T-cell (primary cell): ENCODE measurements at regions of chr17 and their contacts with region 1.

Region 1: DNA sequence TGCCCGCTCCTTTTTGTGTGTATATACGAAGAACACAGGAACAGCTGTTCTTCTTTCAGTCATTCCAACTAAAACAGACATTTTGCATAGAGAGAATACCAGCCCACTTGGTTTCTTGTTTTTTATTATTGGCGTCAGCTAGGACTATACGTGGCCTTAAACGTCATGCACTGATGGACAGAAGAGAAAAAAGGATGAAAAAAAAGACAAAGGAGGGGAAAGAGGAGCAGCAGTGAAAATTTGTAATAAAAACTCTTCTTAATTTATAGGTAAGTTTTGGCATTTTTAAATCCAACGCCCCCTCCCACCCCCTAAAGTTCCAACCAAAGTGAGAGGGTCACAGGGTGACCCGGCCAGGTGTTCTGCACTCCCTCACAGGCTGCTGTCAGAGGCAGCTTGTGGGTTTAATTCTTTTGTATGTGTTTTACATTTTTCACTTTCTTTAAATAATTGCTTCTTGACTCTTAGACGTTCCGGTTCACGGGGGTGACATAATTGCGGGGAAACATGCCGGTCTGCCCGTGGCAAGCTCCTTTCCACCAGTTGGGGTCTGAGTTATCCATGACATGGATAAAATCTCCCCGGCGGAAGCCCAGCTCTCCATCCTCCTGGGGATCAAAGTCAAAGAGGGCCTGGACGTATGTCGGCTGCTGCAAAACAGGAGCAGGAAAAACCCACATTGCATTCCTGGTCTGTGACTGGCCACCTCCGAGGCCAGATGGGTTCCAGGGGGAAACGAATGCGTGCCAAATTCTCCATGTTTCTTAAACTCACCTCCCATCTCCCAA is 30.9 kb upstream of the SLC25A19 start:
- DNase-seq: no peak
- ATAC-seq: no peak
- H3K4me3 ChIP-seq: no peak overlapping the region
- H3K4me3 Mint-ChIP-seq: no peak overlapping the region
- H3K27ac ChIP-seq: no peak overlapping the region
- H3K27ac Mint-ChIP-seq: no peak overlapping the region
- H3K4me1 ChIP-seq: peaks cover 0 to 8% of the 10 kb centered on the region in 2 experiments
- H3K4me1 Mint-ChIP-seq: peaks cover 5 to 8% (median 8%) of the 10 kb centered on the region in 3 donors
- H3K27me3 ChIP-seq: peaks cover 0 to 3% of the 10 kb centered on the region in 2 experiments
- H3K27me3 Mint-ChIP-seq: no peaks in the 10 kb centered on the region

Region 2: GRCh38 chr17:75412455-75413317 is 92.6 kb after region 1 on chr17:
- CTCF ChIA-PET with region 1: interaction called, 3 to 22 read pairs
- POLR2A ChIA-PET with region 1: interaction called in 1 of 2 experiments, 4 read pairs
- DNase-seq: peak; percentile 41 to 89 (median 66)
- ATAC-seq: peak; percentile 75 to 90 (median 87)
- H3K4me3 ChIP-seq: no peak overlapping the region
- H3K4me3 Mint-ChIP-seq: peak overlapping the region in 2 of 3 donors; percentile 35 to 42
- H3K27ac ChIP-seq: no peak overlapping the region
- H3K27ac Mint-ChIP-seq: peak overlapping the region in 1 of 2 donors; percentile 34
- H3K4me1 ChIP-seq: peaks cover 0 to 5% of the 10 kb centered on the region in 2 experiments
- H3K4me1 Mint-ChIP-seq: peaks cover 14 to 19% (median 19%) of the 10 kb centered on the region in 3 donors
- H3K27me3 ChIP-seq: peaks cover 0 to 9% of the 10 kb centered on the region in 2 experiments
- H3K27me3 Mint-ChIP-seq: peaks cover 0 to 11% of the 10 kb centered on the region in 2 donors

Region 3: DNA sequence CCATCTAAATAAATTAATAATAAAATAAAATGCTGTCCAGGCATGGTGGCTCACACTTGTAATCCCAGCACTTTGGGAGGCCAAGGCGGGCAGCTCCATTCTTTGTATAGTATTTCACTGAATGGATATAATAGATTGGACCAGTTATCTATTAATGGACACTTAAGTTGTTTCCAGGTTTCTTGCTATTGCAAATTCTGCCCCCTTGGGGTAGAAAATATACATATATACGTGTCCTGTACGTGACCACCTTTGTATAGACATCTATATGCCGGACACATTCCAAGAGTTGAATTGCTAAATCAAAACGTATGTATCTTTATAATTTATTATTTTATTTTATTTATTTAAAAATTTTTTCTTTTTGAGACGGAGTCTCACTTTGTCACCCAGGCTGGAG is 787.4 kb after region 1 on chr17:
- CTCF ChIA-PET with region 1: no interaction called
- POLR2A ChIA-PET with region 1: interaction called in 1 of 2 experiments, 14 read pairs
- DNase-seq: peak in 1 of 35 experiments; percentile 41
- ATAC-seq: no peak
- H3K4me3 ChIP-seq: no peak overlapping the region
- H3K4me3 Mint-ChIP-seq: no peak overlapping the region
- H3K27ac ChIP-seq: no peak overlapping the region
- H3K27ac Mint-ChIP-seq: no peak overlapping the region
- H3K4me1 ChIP-seq: peaks cover 13 to 17% of the 10 kb centered on the region in 2 experiments
- H3K4me1 Mint-ChIP-seq: peaks cover 19 to 21% (median 19%) of the 10 kb centered on the region in 3 donors
- H3K27me3 ChIP-seq: peaks cover 0 to 3% of the 10 kb centered on the region in 2 experiments
- H3K27me3 Mint-ChIP-seq: no peaks in the 10 kb centered on the region